ENCODE measurements at regions of chr5 and their contacts with region 1.

Region 1: DNA sequence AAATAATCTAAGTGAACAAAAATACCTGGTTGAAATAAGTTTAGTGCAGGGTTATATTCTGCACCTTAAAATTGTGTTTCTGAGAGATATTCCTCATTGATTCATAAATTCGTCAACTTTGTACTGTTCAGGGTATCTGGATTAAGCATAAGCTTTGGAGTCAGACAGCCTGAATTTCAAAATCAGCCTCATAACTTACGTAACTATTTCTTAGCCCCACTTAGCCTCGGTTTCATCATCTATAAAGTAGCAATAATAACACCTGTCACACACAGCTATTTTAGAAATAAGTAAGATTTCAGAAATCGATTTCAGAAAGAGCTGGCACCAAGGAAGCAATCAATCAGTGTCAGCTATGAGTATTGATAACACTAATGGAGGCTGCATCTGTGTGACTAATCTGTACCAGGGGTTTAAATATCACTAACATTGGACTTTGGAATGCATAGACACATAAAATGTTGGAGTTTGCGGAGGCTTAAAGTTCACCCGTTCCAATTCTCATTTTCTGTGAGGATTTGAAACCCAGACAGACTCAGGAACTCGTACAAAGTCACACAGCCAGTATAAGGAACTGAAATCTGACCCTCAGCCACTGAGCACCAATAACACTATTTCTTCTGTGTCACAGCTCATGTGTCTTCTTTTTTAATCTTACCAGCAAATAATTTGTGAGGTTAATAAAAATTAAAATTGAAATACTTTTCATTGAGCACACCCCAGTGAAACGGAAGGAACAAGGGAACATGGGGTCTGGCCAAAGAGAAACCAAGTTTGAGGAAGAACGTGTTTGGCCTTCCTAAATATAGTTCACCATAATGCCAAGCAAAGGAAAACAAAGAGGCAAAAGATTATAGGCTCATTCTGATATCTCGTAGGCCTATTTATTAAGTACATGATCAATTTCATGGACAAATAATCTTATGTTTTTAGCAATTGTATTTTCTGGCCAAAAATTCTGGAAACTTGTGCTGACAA is 194.4 kb upstream of the PTGER4 start:
- H3K4me3 Mint-ChIP-seq: no peak overlapping the region
- H3K27ac Mint-ChIP-seq: peak overlapping the region; percentile 79
- H3K4me1 Mint-ChIP-seq: peaks cover 64% of the 10 kb centered on the region
- H3K27me3 Mint-ChIP-seq: no peaks in the 10 kb centered on the region

Region 2: DNA sequence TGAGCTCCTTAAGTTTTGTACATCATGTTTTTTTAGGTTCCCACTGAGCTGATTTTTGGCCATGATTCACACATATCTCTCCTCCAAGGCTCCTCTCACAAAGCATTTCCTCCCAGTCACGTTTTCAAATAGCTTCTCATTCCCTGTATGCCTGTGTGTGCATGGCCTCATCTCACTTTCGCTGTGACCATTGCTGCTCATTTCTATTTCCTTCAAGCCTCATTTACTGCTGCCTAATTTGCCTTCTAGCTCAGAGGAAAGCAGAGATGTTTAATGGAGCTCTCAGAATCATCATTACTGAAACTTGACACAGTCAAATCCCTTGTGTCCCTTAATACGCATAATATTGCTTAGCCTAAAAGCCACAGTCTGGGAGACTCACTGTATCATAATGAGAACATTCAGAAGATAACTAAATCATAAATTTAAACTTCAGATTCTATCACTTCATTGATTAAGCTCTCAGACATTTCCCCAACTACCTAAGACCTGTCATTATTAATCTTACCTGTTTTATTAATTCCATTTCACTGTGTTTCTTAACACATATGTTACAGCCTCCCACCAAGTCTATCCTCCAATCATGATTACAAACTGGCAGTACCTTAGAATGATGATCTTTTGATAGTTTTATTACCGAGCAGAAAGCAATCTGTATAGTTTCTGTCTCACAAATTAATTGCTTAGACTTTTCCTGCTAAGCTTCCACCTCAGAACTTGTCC is 83.9 kb before region 1 on chr5:
- intact Hi-C with region 1: no loop called
- H3K4me3 Mint-ChIP-seq: no peak overlapping the region
- H3K27ac Mint-ChIP-seq: peak overlapping the region; percentile 15
- H3K4me1 Mint-ChIP-seq: peaks cover 29% of the 10 kb centered on the region
- H3K27me3 Mint-ChIP-seq: no peaks in the 10 kb centered on the region

Region 3: GRCh38 chr5:40442346-40442745 is 43.0 kb before region 1 on chr5:
- intact Hi-C with region 1: loop called (anchors 5 kb)
- H3K4me3 Mint-ChIP-seq: no peak overlapping the region
- H3K27ac Mint-ChIP-seq: no peak overlapping the region
- H3K4me1 Mint-ChIP-seq: peaks cover 10% of the 10 kb centered on the region
- H3K27me3 Mint-ChIP-seq: no peaks in the 10 kb centered on the region

Region 4: DNA sequence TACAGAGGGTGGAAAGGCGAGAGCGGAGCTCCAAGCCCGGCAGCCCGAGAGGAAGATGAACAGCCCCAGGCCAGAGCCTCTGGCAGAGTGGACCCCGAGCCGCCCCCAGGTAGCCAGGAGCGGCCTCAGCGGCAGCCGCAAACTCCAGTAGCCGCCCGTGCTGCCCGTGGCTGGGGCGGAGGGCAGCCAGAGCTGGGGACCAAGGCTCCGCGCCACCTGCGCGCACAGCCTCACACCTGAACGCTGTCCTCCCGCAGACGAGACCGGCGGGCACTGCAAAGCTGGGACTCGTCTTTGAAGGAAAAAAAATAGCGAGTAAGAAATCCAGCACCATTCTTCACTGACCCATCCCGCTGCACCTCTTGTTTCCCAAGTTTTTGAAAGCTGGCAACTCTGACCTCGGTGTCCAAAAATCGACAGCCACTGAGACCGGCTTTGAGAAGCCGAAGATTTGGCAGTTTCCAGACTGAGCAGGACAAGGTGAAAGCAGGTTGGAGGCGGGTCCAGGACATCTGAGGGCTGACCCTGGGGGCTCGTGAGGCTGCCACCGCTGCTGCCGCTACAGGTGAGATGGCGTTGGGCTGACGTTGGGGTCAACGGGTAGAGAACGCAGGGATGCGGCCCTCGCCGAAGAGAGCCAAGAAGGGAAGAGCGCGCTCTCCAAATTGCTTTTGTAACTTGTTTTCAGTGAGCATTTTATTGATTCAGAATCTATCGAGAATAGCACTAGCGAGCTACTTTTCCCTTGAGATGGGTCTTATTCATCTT is 194.8 kb after region 1 on chr5 and contains the start of gene PTGER4:
- intact Hi-C with region 1: loop called (anchors 2 kb)
- H3K4me3 Mint-ChIP-seq: peak within 1 kb of the TSS; percentile 98
- H3K27ac Mint-ChIP-seq: peak within 1 kb of the TSS; percentile 93
- H3K4me1 Mint-ChIP-seq: peaks cover 44% of the 10 kb centered on the region
- H3K27me3 Mint-ChIP-seq: no peaks in the 10 kb centered on the region